Activated CD8-positive, alpha-beta T cell treated with anti-CD3 and anti-CD28 coated beads, Interleukin-2, amount 10 ng/mL, durations not matched to agents 7 days and 5 days (primary cell): ENCODE measurements at regions of chr14 and their contacts with region 1.

Region 1: DNA sequence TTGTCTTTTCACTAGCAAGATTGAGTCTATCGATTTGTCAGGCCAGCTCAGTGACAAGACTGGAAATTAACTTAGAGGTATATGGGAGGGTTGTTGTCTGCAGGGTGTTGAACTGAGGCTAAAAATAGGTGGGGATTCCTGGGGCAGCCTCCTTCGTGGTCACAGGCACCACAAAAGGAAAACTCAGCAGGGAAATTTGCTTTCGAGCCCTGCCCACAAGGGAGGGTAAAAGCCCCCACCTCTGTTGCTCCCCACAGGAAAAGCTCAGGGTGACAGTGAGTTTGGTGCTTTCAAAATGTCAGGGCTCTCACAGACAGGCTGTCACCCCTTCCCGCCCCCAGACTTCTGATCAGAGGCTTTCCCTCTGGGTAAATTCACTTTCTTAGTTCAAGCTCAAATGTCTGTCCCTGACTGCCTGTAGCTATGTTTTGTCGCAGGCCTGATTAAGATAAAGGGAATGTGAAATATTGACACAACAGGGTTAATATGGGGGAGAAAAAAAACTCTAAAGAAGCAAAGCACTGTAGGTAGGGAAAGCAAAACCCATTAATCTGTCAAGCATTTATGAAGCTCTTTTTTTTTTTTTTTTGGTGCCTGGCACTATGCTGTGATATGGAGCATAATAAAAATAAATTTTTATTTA is 11.7 kb upstream of the NFKBIA start:
- DNase-seq: peak; percentile 62
- ATAC-seq: peak; percentile 50
- H3K4me3 Mint-ChIP-seq: peak overlapping the region; percentile 29
- H3K27ac Mint-ChIP-seq: peak overlapping the region; percentile 79
- H3K4me1 Mint-ChIP-seq: peaks cover 51% of the 10 kb centered on the region
- H3K27me3 Mint-ChIP-seq: no peaks in the 10 kb centered on the region

Region 2: DNA sequence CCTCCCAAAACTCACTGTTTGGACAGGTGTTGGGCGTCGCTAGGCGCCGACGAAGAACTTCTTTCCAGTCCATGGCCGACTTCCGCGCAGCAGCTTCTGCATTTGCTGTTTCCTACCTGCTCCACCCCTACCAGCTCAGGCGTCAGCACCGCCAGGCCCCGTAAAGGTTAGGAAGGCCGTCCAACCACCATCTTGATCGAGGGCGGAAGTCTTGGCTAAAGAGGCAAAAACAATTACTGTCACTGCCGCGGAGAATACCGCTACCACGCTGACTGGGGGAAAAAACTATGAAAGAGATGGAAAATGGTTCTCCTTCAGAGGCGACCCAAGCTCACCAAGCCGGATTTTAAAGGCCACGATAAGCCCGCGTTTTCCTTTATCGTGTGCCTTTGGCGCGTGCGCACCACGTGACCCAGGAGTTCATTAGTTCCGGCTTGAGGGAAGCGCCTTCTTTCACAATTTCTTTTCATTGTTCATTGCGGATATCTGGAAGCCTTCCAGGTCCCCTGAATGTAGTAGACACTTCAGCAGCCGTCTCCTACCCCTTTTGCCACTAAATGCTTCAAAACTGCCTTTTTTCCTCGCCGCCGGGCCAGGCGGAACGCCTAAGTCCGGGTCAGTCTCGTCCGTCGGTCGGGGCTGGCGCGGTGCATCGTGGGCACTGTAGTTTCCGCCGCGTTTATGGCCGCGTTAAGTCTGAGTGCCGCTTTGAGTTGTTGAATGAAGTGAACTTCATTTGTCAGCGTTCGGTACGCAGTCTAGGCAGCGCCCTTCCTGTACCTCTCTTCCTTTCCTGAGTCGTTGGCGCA is 294.1 kb before region 1 on chr14 and contains the starts of genes PPP2R3C and PRORP:
- CTCF ChIA-PET with region 1: interaction called, 10 read pairs
- POLR2A ChIA-PET with region 1: interaction called, 3 read pairs
- DNase-seq: peak; percentile 96
- ATAC-seq: peak; percentile 90
- H3K4me3 Mint-ChIP-seq: peak within 1 kb of the TSS; percentile 98
- H3K27ac Mint-ChIP-seq: peak within 1 kb of the TSS; percentile 99
- H3K4me1 Mint-ChIP-seq: peaks cover 55% of the 10 kb centered on the region
- H3K27me3 Mint-ChIP-seq: no peaks in the 10 kb centered on the region
- total RNA-seq, gene PPP2R3C: 33.3 to 38.6 TPM
- total RNA-seq, gene PRORP: 32.5 to 35.4 TPM

Region 3: GRCh38 chr14:35215110-35215876 is 200.9 kb before region 1 on chr14:
- CTCF ChIA-PET with region 1: interaction called, 17 read pairs
- POLR2A ChIA-PET with region 1: interaction called, 3 read pairs
- DNase-seq: no peak
- ATAC-seq: no peak
- H3K4me3 Mint-ChIP-seq: no peak overlapping the region
- H3K27ac Mint-ChIP-seq: no peak overlapping the region
- H3K4me1 Mint-ChIP-seq: peaks cover 16% of the 10 kb centered on the region
- H3K27me3 Mint-ChIP-seq: no peaks in the 10 kb centered on the region

Region 4: DNA sequence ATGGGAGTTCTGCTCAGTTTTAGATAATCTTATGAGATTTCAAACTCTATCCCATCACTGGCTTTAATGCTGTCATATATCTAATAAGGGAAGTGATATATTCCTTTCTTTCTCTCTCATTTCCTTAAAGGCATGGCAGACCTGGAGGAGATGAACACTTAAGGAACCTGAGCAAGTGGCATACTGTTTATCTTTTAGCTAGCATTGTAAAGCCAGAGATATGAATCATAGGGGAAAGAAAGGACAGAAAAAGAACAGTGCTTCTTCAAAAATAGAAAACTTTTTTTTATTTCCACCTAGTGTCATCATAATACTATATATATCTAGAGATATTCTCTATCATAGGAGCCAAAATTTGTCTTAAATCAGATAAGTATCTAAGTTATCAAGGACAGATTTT is 192.3 kb before region 1 on chr14:
- CTCF ChIA-PET with region 1: interaction called, 132 read pairs
- POLR2A ChIA-PET with region 1: interaction called, 3 read pairs
- DNase-seq: no peak
- ATAC-seq: no peak
- H3K4me3 Mint-ChIP-seq: no peak overlapping the region
- H3K27ac Mint-ChIP-seq: no peak overlapping the region
- H3K4me1 Mint-ChIP-seq: peaks cover 11% of the 10 kb centered on the region
- H3K27me3 Mint-ChIP-seq: no peaks in the 10 kb centered on the region

Region 5: GRCh38 chr14:35553808-35554207 is 137.6 kb after region 1 on chr14:
- CTCF ChIA-PET with region 1: no interaction called
- POLR2A ChIA-PET with region 1: no interaction called
- DNase-seq: no peak
- ATAC-seq: no peak
- H3K4me3 Mint-ChIP-seq: no peak overlapping the region
- H3K27ac Mint-ChIP-seq: no peak overlapping the region
- H3K4me1 Mint-ChIP-seq: no peaks in the 10 kb centered on the region
- H3K27me3 Mint-ChIP-seq: no peaks in the 10 kb centered on the region